Naive thymus-derived CD4-positive, alpha-beta T cell (primary cell): ENCODE measurements at regions of chr4 and their contacts with region 1.

Region 1: GRCh38 chr4:184263910-184264732 is 46.4 kb upstream of the ENPP6 start:
- DNase-seq: peak; percentile 80 to 90 (median 87)
- ATAC-seq: peak; percentile 86
- H3K4me3 ChIP-seq: no peak overlapping the region
- H3K4me3 Mint-ChIP-seq: peak overlapping the region in 1 of 10 donors; percentile 17
- H3K27ac ChIP-seq: no peak overlapping the region
- H3K27ac Mint-ChIP-seq: peak overlapping the region in 6 of 9 donors; percentile 5 to 72 (median 63)
- H3K4me1 ChIP-seq: peaks cover 6 to 14% of the 10 kb centered on the region in 2 donors
- H3K4me1 Mint-ChIP-seq: peaks cover 5 to 54% (median 28%) of the 10 kb centered on the region in 7 donors
- H3K27me3 ChIP-seq: no peaks in the 10 kb centered on the region
- H3K27me3 Mint-ChIP-seq: peaks cover 0 to 2% (median 0%) of the 10 kb centered on the region in 5 donors

Region 2: GRCh38 chr4:183504064-183504929 is 759.8 kb before region 1 on chr4:
- CTCF ChIA-PET with region 1: no interaction called
- POLR2A ChIA-PET with region 1: no interaction called
- intact Hi-C with region 1: loop called in 1 of 2 experiments (anchors 10 kb)
- DNase-seq: peak; percentile 98 to 100 (median 100)
- ATAC-seq: peak; percentile 89
- H3K4me3 ChIP-seq: peak overlapping the region; percentile 90
- H3K4me3 Mint-ChIP-seq: peak overlapping the region; percentile 83 to 98 (median 92)
- H3K27ac ChIP-seq: peak overlapping the region; percentile 86
- H3K27ac Mint-ChIP-seq: peak overlapping the region; percentile 89 to 99 (median 95)
- H3K4me1 ChIP-seq: peaks cover 6 to 11% of the 10 kb centered on the region in 2 donors
- H3K4me1 Mint-ChIP-seq: peaks cover 11 to 47% (median 43%) of the 10 kb centered on the region in 7 donors
- H3K27me3 ChIP-seq: no peaks in the 10 kb centered on the region
- H3K27me3 Mint-ChIP-seq: no peaks in the 10 kb centered on the region

Region 3: DNA sequence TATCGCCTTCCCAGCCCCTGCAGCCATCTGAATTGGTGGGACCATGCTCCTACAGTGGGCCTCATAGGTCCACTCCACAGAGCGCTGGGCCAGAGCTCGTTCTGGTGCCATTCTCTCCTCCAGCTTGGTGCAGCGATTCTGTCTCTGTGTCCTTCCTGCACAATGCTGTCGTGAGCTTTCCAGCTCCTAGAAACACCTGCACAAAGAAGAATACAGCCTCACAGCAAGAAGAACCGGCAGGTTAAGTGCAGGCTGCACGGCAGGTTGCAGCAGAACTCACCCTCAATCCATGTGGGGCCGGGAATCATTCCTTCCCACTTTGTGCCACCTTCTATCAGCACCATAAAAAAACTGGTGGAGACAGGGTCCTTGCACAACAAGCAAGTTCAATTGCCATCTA is 54.7 kb after region 1 on chr4:
- CTCF ChIA-PET with region 1: no interaction called
- POLR2A ChIA-PET with region 1: no interaction called
- intact Hi-C with region 1: loop called in 1 of 2 experiments (anchors 2 kb)
- DNase-seq: no peak
- ATAC-seq: no peak
- H3K4me3 ChIP-seq: no peak overlapping the region
- H3K4me3 Mint-ChIP-seq: peak overlapping the region in 1 of 10 donors; percentile 10
- H3K27ac ChIP-seq: no peak overlapping the region
- H3K27ac Mint-ChIP-seq: peak overlapping the region in 1 of 9 donors; percentile 81
- H3K4me1 ChIP-seq: no peaks in the 10 kb centered on the region
- H3K4me1 Mint-ChIP-seq: peaks cover 5 to 48% (median 13%) of the 10 kb centered on the region in 7 donors
- H3K27me3 ChIP-seq: no peaks in the 10 kb centered on the region
- H3K27me3 Mint-ChIP-seq: no peaks in the 10 kb centered on the region

Region 4: GRCh38 chr4:184444953-184445309 is 180.8 kb after region 1 on chr4:
- CTCF ChIA-PET with region 1: no interaction called
- POLR2A ChIA-PET with region 1: no interaction called
- intact Hi-C with region 1: no loop called
- DNase-seq: peak in 4 of 9 donors; percentile 15 to 32 (median 18)
- ATAC-seq: peak; percentile 72
- H3K4me3 ChIP-seq: no peak overlapping the region
- H3K4me3 Mint-ChIP-seq: peak overlapping the region in 8 of 10 donors; percentile 9 to 93 (median 40)
- H3K27ac ChIP-seq: no peak overlapping the region
- H3K27ac Mint-ChIP-seq: peak overlapping the region in 7 of 9 donors; percentile 10 to 70 (median 16)
- H3K4me1 ChIP-seq: peaks cover 7 to 52% of the 10 kb centered on the region in 2 donors
- H3K4me1 Mint-ChIP-seq: peaks cover 85 to 100% (median 98%) of the 10 kb centered on the region in 7 donors
- H3K27me3 ChIP-seq: no peaks in the 10 kb centered on the region
- H3K27me3 Mint-ChIP-seq: no peaks in the 10 kb centered on the region

Region 5: DNA sequence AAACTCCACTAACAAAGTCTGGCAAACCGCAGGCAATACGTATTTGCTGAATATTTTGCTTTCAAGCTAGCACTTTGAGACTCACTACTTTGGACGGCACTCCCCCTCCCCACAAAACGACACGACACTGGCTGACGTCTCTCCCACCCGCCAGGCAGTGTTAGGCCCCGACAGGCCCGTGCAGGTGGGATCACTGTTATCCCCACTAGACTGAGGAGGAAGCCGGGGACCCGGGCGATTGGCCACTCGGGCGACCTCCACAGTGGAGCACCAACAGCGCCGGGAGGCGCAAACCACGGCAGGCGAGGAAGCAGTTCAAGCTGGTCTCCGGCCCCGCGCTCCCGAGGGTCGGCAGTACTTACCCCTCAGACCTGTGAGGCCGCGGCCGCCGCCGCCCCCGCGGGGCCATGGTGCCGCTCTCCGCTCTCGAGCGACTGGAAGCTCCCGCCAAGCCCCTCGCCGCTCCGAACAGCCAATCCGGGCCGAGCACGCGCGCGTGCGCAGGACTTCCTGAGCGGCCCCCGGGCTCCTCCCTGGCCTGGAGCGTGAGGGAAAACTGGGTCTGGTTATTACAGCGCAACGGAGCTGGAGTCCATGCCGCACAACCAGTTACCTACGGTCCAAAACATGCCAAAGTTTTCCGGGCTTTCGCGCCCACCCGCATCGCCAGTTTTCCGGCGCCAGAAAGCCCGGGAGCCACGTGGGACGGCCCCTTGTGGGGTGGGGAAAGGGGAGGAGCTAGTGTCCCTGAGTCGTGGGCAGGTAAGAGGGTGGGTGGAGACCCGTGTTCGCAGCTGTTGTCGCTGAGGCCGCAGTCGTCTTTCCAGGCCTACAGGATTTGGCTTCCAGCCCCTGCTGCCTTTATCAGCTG is 469.8 kb after region 1 on chr4 and contains the start of gene CENPU:
- CTCF ChIA-PET with region 1: interaction called, 7 read pairs
- POLR2A ChIA-PET with region 1: interaction called, 7 read pairs
- intact Hi-C with region 1: loop called (anchors 1 kb)
- DNase-seq: peak; percentile 89 to 98 (median 94)
- ATAC-seq: peak; percentile 98
- H3K4me3 ChIP-seq: peak within 1 kb of the TSS; percentile 82
- H3K4me3 Mint-ChIP-seq: peak within 1 kb of the TSS; percentile 84 to 98 (median 89)
- H3K27ac ChIP-seq: peak within 1 kb of the TSS; percentile 66
- H3K27ac Mint-ChIP-seq: peak within 1 kb of the TSS; percentile 60 to 96 (median 89)
- H3K4me1 ChIP-seq: peaks cover 7 to 11% of the 10 kb centered on the region in 2 donors
- H3K4me1 Mint-ChIP-seq: peaks cover 4 to 50% (median 20%) of the 10 kb centered on the region in 7 donors
- H3K27me3 ChIP-seq: no peaks in the 10 kb centered on the region
- H3K27me3 Mint-ChIP-seq: no peaks in the 10 kb centered on the region
- total RNA-seq, gene CENPU: 1.1 to 43.8 (median 3.1) TPM

Region 6: DNA sequence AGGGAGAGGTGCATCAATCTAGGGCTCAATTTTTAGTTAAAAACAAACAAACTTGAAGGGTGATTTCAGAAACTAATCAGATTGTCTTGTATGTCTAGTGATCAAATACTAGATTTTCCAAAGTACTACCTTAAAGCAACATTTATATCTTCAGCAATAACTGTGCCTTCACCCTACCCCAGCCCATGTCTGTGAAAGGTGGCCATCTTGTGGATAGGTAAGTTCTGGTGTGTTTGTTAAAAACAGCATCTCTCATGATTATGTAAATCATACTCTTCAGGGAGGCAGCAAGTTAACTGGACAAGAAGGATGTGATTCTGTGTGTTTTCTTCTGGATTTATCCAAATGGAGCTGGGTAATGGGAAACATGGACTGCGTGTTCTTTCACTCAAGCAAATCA is 643.1 kb after region 1 on chr4:
- CTCF ChIA-PET with region 1: no interaction called
- POLR2A ChIA-PET with region 1: no interaction called
- intact Hi-C with region 1: loop called (anchors 1 to 2 kb)
- DNase-seq: peak in 3 of 9 donors; percentile 2 to 18 (median 4)
- ATAC-seq: no peak
- H3K4me3 ChIP-seq: no peak overlapping the region
- H3K4me3 Mint-ChIP-seq: no peak overlapping the region
- H3K27ac ChIP-seq: no peak overlapping the region
- H3K27ac Mint-ChIP-seq: peak overlapping the region in 1 of 9 donors; percentile 10
- H3K4me1 ChIP-seq: no peaks in the 10 kb centered on the region
- H3K4me1 Mint-ChIP-seq: peaks cover 0 to 11% (median 7%) of the 10 kb centered on the region in 7 donors
- H3K27me3 ChIP-seq: no peaks in the 10 kb centered on the region
- H3K27me3 Mint-ChIP-seq: peaks cover 0 to 6% (median 2%) of the 10 kb centered on the region in 5 donors

Region 7: GRCh38 chr4:185096032-185096653 is 832.0 kb after region 1 on chr4:
- CTCF ChIA-PET with region 1: interaction called, 4 read pairs
- POLR2A ChIA-PET with region 1: no interaction called
- intact Hi-C with region 1: loop called in 1 of 2 experiments (anchors 1 kb)
- DNase-seq: peak in 6 of 9 donors; percentile 16 to 39 (median 27)
- ATAC-seq: peak; percentile 27
- H3K4me3 ChIP-seq: no peak overlapping the region
- H3K4me3 Mint-ChIP-seq: no peak overlapping the region
- H3K27ac ChIP-seq: no peak overlapping the region
- H3K27ac Mint-ChIP-seq: no peak overlapping the region
- H3K4me1 ChIP-seq: no peaks in the 10 kb centered on the region
- H3K4me1 Mint-ChIP-seq: no peaks in the 10 kb centered on the region
- H3K27me3 ChIP-seq: no peaks in the 10 kb centered on the region
- H3K27me3 Mint-ChIP-seq: peaks cover 9 to 30% (median 14%) of the 10 kb centered on the region in 5 donors

Region 8: DNA sequence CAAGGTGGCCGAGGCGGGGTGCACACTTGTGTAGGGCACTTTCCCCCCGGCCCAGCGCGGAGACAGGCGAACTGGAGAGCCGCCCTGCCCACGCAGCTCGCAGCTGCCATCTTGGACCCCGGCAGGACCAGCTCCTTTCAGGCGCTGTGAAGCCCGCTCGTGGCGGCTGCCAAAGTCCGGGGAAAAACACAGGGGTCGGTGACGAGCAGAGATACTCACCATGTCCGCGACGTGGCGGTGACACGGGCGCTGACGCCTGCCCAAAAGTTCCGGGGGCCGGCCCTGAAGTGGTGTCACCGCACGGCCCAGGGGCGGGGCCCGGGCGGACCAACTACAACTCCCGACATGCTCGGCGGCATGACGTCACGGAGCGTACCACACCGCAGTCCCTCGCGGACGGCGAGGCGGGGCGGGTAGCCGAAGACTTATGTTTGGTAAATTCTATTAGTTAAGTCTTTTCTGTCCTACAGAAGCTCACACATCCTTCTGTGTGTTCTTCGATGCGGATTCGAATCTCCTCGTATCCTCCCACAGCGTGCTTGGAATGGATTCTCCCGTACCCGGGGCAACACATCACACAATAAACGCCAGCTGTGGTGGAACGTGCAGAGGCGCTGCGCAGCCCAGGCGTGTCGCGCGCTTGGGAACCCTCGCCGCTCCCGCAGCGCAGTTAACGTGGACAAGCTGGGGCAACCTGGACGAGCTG is 1161.7 kb after region 1 on chr4 and contains the start of gene UFSP2:
- CTCF ChIA-PET with region 1: no interaction called
- POLR2A ChIA-PET with region 1: no interaction called
- intact Hi-C with region 1: loop called in 1 of 2 experiments (anchors 10 kb)
- DNase-seq: peak; percentile 88 to 96 (median 92)
- ATAC-seq: peak; percentile 93
- H3K4me3 ChIP-seq: peak within 1 kb of the TSS; percentile 98
- H3K4me3 Mint-ChIP-seq: peak within 1 kb of the TSS; percentile 78 to 97 (median 90)
- H3K27ac ChIP-seq: peak within 1 kb of the TSS; percentile 95
- H3K27ac Mint-ChIP-seq: peak within 1 kb of the TSS; percentile 89 to 100 (median 99)
- H3K4me1 ChIP-seq: peaks cover 16 to 18% of the 10 kb centered on the region in 2 donors
- H3K4me1 Mint-ChIP-seq: peaks cover 25 to 43% (median 38%) of the 10 kb centered on the region in 7 donors
- H3K27me3 ChIP-seq: no peaks in the 10 kb centered on the region
- H3K27me3 Mint-ChIP-seq: peaks cover 0 to 12% (median 7%) of the 10 kb centered on the region in 5 donors
- total RNA-seq, gene UFSP2: 13.9 to 34.5 (median 21.0) TPM